Common myeloid progenitor, CD34-positive (primary cell): ENCODE measurements at regions of chr2 and their contacts with region 1.

Region 1: DNA sequence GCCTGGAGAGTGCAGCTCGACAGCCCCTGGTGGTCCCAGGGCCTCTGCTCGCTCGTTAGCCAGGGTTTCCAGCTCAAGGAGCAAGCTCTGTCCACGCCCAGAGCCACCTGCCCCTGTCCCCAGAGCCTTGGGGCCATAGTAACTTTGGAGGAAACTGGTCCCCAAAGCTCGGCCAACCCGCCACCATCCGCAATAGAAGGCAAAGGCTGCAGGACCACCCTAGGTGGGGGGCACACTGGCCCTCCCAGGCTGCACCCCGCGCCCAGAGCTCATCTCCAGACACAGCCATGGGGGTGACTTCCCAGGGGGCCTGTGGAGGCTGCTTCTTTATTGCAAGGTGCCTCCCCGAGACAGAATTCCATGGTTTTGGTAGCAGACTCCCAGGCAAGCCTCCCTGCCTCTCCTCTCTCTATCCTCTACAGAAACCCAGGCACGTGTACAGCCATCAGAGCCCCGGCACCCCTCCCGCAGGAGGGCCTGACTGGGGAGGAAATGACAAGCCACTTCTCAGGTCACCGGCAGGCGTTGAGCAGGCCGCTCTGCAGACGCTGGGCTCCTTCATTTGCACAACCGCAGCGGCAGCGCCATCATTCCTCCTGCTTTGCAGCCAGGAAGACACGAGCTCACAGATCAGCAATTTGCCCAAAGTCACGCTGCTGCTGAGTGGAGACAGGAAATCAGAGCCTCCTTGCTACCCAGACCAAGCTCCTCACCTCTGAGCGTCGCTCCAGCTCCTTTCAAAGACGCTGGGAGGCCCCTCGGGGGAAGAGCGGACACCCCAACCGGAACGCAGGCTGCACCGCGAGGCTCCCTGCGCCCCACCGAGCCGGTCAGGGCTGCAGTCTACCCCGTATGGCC is 80.2 kb downstream of the NDUFA10 start:
- DNase-seq: peak; percentile 79 to 96 (median 93)
- H3K4me3 ChIP-seq: peak overlapping the region in 4 of 7 experiments; percentile 8 to 59 (median 24)
- H3K27ac ChIP-seq: no peak overlapping the region
- H3K4me1 ChIP-seq: peaks cover 0 to 21% (median 18%) of the 10 kb centered on the region in 4 experiments
- H3K27me3 ChIP-seq: no peaks in the 10 kb centered on the region

Region 2: DNA sequence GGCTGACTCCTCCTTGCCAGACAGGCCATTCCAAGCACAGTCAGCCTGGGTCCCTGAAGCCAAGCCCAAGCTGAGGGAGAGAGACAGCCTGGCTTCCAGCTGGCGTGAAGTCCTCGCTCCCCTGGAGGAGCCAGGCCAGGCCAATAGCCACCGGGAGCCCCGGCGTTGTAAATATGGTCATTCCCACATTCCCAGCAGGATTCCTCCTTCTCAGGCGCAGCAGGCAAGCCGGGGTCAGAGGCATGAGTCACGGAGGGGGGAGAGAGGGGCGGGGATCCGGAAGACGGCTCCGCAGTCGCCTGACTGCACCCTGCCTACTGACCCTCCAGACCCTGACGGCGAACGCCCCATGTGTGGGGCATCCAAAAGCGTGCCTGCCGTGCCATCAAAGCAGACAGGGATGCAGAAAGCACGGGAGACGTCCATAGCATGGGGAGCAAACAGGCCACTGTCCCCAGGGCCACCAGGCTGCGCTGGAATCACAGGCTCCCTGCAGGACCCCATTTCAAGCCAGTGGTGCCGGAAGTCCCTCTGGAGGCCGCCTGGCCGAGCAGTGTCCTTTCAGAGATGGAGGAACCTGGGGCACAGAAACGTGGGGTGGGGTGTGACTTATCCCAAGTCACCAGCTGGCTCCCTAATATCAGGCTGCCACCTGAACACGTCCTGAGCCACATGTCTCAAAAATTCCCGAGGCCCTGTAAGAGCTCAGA is 1048.9 kb before region 1 on chr2:
- CTCF ChIA-PET with region 1: no interaction called
- POLR2A ChIA-PET with region 1: no interaction called
- DNase-seq: no peak
- H3K4me3 ChIP-seq: no peak overlapping the region
- H3K27ac ChIP-seq: no peak overlapping the region
- H3K4me1 ChIP-seq: no peaks in the 10 kb centered on the region
- H3K27me3 ChIP-seq: peaks cover 0 to 68% (median 4%) of the 10 kb centered on the region in 5 experiments

Region 3: DNA sequence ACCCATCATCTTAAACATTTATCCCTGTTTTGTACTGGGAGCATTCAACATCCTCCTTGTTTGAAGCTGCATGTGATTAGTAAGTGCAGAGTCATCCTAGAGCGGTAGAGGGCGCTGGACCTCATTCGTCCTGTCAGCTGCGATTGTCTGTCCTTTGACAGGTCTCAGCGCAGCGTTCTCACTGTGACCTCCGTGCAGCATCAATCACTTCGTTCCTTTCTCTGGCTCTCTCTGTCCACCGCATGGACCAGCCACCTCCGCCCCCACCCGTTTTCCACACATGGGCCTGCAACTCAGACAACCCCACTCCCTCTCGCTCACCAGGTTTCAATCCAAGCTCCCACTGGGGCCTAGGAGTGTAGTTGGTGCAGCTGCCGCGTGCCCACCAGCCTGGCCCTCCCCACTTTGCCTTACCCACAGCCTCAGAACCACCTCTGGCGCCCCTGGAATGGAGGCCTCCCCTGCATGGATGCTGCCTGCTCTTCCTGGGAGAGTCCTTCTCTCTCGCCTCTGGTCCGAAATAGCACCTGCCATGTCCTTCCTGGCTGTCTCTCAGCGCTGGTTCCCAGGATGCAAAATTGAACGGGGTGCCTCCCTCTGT is 10.3 kb before region 1 on chr2:
- CTCF ChIA-PET with region 1: interaction called, 10 read pairs
- POLR2A ChIA-PET with region 1: no interaction called
- DNase-seq: peak; percentile 62 to 82 (median 80)
- H3K4me3 ChIP-seq: no peak overlapping the region
- H3K27ac ChIP-seq: no peak overlapping the region
- H3K4me1 ChIP-seq: peaks cover 0 to 6% (median 2%) of the 10 kb centered on the region in 4 experiments
- H3K27me3 ChIP-seq: no peaks in the 10 kb centered on the region

Region 4: DNA sequence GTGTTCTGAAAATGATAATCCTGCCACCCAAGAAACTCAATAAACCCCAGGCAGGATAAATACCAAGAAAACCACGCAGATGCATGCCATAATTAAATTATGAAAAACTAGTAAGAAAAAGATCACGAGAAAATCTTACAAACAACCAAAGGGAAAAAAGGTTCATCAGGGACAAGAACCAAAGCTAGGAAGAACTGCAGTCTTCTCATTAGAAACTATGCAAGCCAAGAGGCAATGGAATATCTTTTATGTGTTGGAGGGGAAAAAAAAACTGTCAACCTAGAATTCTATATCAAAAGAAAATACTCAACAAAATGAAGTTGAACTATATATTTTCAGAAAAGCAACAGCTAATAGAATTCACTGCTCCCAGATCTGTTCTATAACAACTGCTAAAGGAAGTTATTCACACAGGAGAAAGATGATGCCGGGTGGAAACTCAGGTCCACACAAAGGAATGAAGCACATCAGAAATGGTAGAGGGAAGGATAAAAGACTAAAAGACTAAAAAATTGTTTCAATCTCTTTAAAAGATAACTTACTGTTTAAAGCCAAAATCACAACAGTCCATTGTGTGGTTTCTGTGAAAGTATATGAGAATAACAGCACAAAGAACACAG is 25.2 kb after region 1 on chr2:
- CTCF ChIA-PET with region 1: interaction called, 12 read pairs
- POLR2A ChIA-PET with region 1: no interaction called
- DNase-seq: peak; percentile 4 to 47 (median 28)
- H3K4me3 ChIP-seq: no peak overlapping the region
- H3K27ac ChIP-seq: no peak overlapping the region
- H3K4me1 ChIP-seq: no peaks in the 10 kb centered on the region
- H3K27me3 ChIP-seq: no peaks in the 10 kb centered on the region